OCI-LY7 (cell line): ENCODE measurements at regions of chr20 and their contacts with region 1.

Region 1: DNA sequence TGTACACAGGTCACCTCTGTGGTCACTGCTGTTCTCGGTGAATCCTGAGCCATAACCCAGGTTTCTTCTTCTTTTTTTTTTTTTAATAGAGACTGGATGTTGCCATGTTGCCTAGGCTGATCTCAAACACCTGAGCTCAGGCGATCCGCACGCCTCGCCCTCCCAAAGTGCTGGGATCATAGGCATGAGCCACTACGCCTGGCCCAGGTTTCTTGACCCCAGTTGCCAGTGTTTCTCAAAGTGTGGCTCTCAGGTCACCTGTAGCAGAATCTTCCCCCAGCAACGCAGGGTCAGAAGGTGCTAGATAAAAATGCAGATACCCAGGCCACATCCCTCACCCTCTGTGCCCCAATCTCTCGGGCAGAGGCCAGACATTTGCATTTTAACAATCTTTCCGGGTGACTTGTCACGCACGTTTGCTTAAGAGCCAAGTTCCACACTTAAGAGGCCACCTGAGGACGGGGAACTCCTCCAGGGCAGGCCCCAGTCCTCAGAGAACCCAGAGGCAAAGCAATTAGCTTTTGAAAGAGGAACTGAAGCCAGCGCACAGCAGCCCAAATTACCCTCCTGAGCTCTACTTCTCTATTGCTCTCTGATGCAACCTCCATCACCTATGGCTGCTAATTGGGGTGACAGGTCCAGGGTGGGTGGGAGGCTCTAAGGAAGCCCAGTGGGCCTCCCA is 81.8 kb downstream of the NFATC2 start:
- DNase-seq: peak; percentile 98
- H3K4me3 ChIP-seq: peak overlapping the region; percentile 12
- H3K27ac ChIP-seq: peak overlapping the region; percentile 98
- H3K4me1 ChIP-seq: peaks cover 85% of the 10 kb centered on the region
- CTCF ChIP-seq: no peak

Region 2: DNA sequence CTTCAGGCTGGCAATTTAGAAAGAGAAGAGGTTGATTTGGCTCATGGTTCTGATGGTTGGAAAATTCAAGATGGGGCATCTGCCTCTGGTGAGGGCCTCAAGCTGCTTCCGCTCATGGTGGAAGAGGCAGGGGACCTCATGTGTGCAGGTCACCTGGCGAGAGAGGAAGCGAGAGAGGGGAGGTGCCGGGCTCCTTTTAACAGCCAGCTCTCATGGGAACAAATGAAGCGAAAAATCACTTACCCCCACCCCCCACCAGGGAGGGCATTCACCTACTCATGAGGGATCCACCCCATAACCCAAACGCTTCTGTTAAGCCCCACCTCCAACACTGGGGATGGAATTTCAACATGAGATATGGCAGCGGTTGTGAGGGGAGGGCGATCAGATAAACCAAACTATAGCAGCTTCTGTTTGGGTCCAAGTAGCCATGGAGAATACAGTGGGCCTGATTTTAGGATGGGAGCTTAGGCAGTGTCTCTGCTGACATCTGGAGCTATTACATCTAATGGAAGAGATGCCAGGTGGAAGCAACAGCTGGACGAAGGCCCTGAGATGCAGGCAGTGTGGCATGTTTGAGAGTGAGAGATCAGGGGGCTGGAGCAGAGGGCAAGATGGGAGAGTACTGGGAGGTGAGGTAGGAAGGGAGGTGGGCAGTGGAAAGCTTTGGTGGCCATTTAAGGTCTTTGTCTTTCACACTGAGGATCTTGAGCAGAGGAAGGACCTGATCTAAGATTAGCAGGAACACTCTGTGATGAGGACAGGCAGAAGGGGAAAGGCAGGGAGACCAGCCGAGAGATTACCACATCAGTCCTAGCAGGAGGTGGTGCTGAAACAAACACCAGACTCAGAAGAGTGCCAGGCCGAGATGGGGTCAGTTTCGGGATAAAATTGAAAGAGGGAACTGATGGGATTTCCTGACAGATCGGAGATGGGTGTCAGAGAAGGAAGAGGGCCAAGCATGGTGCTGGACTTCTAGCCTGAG is 80.0 kb before region 1 on chr20:
- CTCF ChIA-PET with region 1: interaction called, 5 read pairs
- POLR2A ChIA-PET with region 1: interaction called, 7 read pairs
- intact Hi-C with region 1: loop called (anchors 1 kb)
- DNase-seq: peak; percentile 99
- H3K4me3 ChIP-seq: peak overlapping the region; percentile 56
- H3K27ac ChIP-seq: peak overlapping the region; percentile 95
- H3K4me1 ChIP-seq: peaks cover 94% of the 10 kb centered on the region
- CTCF ChIP-seq: no peak

Region 3: DNA sequence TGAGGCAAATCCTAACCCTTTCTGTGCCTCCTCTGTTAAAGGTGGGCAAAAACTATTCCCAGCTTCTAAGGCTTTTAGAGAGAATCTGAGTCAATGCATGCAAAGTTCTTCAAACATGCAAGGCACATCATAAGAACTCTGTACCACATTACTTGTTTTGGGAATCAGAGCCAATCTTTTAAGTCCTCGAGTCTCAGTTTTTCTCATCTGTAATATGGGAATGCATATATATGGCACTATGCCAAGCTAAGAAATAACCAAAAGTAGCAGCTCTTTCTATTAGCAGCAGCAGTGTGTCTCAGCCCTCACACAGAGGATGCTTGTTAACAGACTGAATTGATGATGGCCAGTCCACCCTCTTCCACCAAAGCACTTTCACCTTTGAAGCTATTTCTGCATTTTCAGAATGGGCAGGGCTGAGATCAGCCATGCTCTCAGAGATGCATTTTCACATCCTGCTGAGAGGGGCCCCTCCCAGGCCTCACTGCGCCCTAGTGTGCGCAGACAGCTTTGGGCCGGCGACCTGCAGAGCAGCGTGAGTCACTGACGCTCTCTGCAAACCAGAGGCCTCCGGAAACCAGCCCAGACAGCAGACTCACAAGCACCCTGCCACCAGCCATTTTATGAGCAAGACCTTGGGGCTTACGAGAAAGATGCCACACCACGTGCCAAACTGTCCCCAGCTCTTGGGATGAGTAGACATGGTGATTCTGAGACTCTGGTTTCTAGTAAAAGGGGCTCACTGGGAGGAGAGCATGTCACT is 56.2 kb before region 1 on chr20:
- CTCF ChIA-PET with region 1: no interaction called
- POLR2A ChIA-PET with region 1: interaction called, 9 read pairs
- intact Hi-C with region 1: loop called (anchors 1 kb)
- DNase-seq: peak; percentile 88
- H3K4me3 ChIP-seq: peak overlapping the region; percentile 15
- H3K27ac ChIP-seq: peak overlapping the region; percentile 89
- H3K4me1 ChIP-seq: peaks cover 67% of the 10 kb centered on the region
- CTCF ChIP-seq: no peak

Region 4: DNA sequence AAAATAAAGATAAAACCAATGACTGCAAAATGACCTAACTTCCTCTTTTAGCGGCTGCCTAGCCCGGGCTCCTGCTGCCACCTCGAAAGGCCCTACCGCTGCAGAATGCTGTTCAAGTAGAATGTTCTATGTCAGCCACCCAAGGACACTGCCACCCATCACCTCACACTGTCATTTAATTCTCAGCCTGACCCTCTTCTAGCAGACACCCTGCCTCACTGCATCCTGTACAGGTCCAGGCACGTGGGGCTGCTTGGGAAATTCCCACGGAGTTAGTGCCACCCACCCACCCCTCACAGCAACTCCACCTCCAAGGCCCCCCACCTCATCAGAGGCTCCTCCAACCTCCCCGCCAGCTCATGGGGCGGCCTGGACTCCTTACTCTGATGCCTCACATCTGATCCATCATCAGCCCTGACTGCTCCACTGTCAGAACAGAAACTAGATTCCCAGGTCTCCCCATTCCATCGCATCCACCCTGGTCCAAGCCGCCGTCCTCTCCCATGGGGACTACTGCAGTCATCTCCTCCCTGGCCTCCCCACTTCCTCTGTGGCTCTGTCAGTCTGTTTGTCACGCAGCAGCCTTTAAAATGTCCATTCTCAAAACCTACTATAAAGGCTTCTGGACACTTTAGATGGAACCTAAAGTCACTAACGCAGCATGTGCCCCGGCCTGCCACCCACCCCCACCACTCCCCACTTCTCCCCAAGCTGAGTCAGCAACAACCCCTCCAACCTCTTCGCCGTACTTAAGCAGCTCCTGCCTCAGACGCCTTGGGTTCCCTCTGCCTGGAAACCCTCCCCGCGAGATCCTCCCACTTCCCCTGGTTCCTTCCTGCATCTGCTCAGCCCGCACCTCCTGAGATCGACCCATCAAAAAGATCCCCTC is 64.8 kb after region 1 on chr20:
- CTCF ChIA-PET with region 1: no interaction called
- POLR2A ChIA-PET with region 1: interaction called, 3 read pairs
- intact Hi-C with region 1: loop called (anchors 2 kb)
- DNase-seq: peak; percentile 43
- H3K4me3 ChIP-seq: peak overlapping the region; percentile 56
- H3K27ac ChIP-seq: peak overlapping the region; percentile 61
- H3K4me1 ChIP-seq: peaks cover 59% of the 10 kb centered on the region
- CTCF ChIP-seq: no peak

Region 5: GRCh38 chr20:51595058-51595532 is 134.4 kb after region 1 on chr20:
- CTCF ChIA-PET with region 1: no interaction called
- POLR2A ChIA-PET with region 1: interaction called, 4 read pairs
- intact Hi-C with region 1: loop called (anchors 2 kb)
- DNase-seq: peak; percentile 96
- H3K4me3 ChIP-seq: peak overlapping the region; percentile 21
- H3K27ac ChIP-seq: peak overlapping the region; percentile 67
- H3K4me1 ChIP-seq: peaks cover 46% of the 10 kb centered on the region
- CTCF ChIP-seq: peak; percentile 94